HepG2 (cell line): ENCODE measurements at regions of chr10 and their contacts with region 1.

Region 1: GRCh38 chr10:80324086-80324485 is 32.5 kb downstream of the DYDC1 start:
- DNase-seq: no peak
- ATAC-seq: no peak
- H3K4me3 ChIP-seq: no peak overlapping the region
- H3K27ac ChIP-seq: no peak overlapping the region
- H3K4me1 ChIP-seq: peaks cover 51% of the 10 kb centered on the region
- H3K27me3 ChIP-seq: no peaks in the 10 kb centered on the region; a peak in 1 of 5 replicates
- CTCF ChIP-seq: no peak
- EP300 ChIP-seq: no peak
- POLR2A ChIP-seq: no peak
- RAD21 ChIP-seq: no peak

Region 2: DNA sequence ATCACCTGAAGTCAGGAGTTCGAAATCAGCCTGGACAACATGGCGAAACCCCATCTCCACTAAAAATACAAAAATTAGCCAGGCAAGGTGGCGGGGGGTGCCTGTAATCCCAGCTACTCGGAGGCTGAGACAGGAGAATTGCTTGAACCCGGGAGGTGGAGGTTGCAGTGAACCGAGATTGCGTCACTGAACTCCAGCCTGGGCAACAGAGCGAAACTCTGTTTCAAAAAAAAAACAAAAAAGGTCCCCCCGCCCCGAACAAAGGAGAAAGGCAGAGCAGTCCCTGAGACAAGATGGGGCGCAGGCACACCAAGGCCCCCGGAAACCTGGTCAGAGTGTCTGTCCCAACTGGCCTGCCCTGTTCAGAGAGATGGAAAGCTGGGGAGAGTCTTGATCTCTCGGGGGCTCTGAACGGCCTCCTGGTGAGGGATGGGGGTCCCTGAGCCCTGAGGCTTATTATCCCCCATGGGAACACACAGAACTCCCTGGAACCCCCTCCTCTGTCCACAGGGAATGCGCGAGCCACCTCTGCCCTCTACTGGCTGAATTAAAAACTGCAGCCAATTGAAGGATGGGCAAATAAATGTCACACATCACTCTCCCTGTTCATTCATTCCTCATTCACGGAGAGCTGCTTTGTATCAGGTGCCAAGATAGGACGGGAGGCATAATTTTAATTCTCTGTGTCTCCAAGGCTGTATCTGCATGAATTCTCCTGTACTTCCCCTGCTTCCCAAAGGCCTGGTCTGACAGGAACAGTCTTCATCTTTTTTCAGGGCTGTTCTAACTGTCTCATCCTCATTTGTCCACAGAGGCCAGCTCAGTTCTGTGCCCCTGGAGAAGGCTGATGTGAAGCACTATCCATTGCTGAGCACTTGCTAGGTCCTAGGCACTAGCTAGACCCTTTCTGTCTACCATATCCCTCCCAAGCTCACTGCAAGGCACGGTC is 63.5 kb before region 1 on chr10:
- CTCF ChIA-PET with region 1: no interaction called
- POLR2A ChIA-PET with region 1: no interaction called
- in situ Hi-C with region 1: no loop called
- intact Hi-C with region 1: loop called (anchors 5 kb)
- DNase-seq: peak; percentile 48
- ATAC-seq: peak; percentile 37
- H3K4me3 ChIP-seq: no peak overlapping the region
- H3K27ac ChIP-seq: no peak overlapping the region
- H3K4me1 ChIP-seq: peaks cover 69% of the 10 kb centered on the region
- H3K27me3 ChIP-seq: no peaks in the 10 kb centered on the region
- CTCF ChIP-seq: peak; percentile 78
- EP300 ChIP-seq: no peak
- POLR2A ChIP-seq: no peak
- RAD21 ChIP-seq: peak; percentile 18; the same call in 1 of the 2 replicates

Region 3: GRCh38 chr10:80356563-80356988 is 32.5 kb after region 1 on chr10 and contains the starts of genes DYDC1 and DYDC2:
- CTCF ChIA-PET with region 1: no interaction called
- POLR2A ChIA-PET with region 1: no interaction called
- in situ Hi-C with region 1: no loop called
- intact Hi-C with region 1: no loop called
- DNase-seq: no peak
- ATAC-seq: no peak
- H3K4me3 ChIP-seq: no peak within 1 kb of the TSS; a peak in 1 of 6 replicates
- H3K27ac ChIP-seq: no peak within 1 kb of the TSS
- H3K4me1 ChIP-seq: peaks cover 15% of the 10 kb centered on the region
- H3K27me3 ChIP-seq: no peaks in the 10 kb centered on the region
- CTCF ChIP-seq: no peak
- EP300 ChIP-seq: no peak
- POLR2A ChIP-seq: no peak
- RAD21 ChIP-seq: no peak
- total RNA-seq, gene DYDC1: not detected in 2 replicates
- total RNA-seq, gene DYDC2: 2.3 and 4.2 TPM in 2 replicates

Region 4: GRCh38 chr10:80453701-80454513 is 129.8 kb after region 1 on chr10 and contains the start of gene TSPAN14:
- CTCF ChIA-PET with region 1: no interaction called
- POLR2A ChIA-PET with region 1: no interaction called
- in situ Hi-C with region 1: no loop called
- intact Hi-C with region 1: loop called (anchors 1 kb)
- DNase-seq: peak; percentile 53
- ATAC-seq: peak; percentile 87
- H3K4me3 ChIP-seq: peak within 1 kb of the TSS; percentile 89 to 99 (median 93)
- H3K27ac ChIP-seq: peak within 1 kb of the TSS; percentile 77
- H3K4me1 ChIP-seq: peaks cover 71% of the 10 kb centered on the region
- H3K27me3 ChIP-seq: no peaks in the 10 kb centered on the region; a peak in 1 of 5 replicates
- CTCF ChIP-seq: no peak
- EP300 ChIP-seq: no peak; a peak in 1 of 4 replicates
- POLR2A ChIP-seq: peak; percentile 16 to 54; a peak in 3 of 4 replicates
- RAD21 ChIP-seq: peak; percentile 45; the same call in 1 of the 2 replicates
- total RNA-seq, gene TSPAN14: 17.4 and 24.1 TPM in 2 replicates